ENCODE measurements at regions of chr12 and their contacts with region 1.

Region 1: GRCh38 chr12:69070319-69071090 is 137.5 kb upstream of the CPM start:
- DNase-seq: peak; percentile 39 to 48 (median 42)
- H3K4me3 ChIP-seq: no peak overlapping the region
- H3K4me3 Mint-ChIP-seq: no peak overlapping the region
- H3K27ac ChIP-seq: no peak overlapping the region
- H3K27ac Mint-ChIP-seq: peak overlapping the region in 1 of 7 donors; percentile 3
- H3K4me1 ChIP-seq: no peaks in the 10 kb centered on the region
- H3K4me1 Mint-ChIP-seq: no peaks in the 10 kb centered on the region
- H3K27me3 ChIP-seq: no peaks in the 10 kb centered on the region
- H3K27me3 Mint-ChIP-seq: peaks cover 3 to 7% of the 10 kb centered on the region in 2 donors

Region 2: DNA sequence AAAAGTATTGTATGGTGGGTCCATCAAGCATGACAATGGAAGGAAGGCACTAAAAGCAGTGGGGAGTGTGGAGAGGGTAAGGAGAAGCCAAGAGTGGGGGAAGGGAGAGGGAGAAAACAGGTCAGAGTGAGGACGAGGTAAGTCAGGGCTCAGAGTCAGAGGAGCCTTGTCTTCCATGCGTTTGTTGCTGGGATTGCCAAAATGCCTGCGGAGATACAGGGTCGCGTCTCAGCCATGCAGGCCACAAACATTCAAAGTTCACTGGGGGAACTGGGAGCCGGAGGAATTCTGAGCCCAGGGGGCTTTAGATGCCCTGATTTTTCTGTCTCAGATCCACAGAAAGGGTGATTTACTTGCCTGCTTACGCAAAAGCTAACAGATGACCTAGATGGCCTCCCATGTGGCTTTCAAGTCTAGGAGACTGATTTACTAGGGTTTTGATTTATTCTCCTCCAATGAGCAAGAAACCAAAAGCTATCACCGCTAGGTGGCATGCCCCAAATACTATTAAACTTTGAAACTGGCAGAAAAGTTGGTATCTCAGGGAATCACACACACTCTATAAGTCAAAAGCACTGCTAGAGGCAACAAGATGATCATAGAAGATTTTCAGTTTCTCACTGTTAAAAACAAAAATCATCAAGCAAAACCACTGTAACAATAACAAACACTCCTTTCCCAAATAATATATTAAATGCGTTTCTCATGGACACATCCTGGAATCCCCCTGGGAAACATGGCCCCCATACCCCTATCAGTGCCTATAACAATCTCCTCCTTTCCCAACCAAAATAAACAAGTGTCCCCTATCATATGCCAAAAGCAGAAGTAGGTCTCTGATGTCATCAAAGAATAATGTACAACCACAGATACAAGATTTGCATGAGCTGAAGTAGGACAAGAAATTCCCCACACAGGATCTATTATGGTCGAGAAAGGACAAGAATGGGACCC is 711.7 kb before region 1 on chr12:
- CTCF ChIA-PET with region 1: no interaction called
- POLR2A ChIA-PET with region 1: no interaction called
- intact Hi-C with region 1: loop called (anchors 2 kb)
- DNase-seq: peak; percentile 71 to 76 (median 74)
- H3K4me3 ChIP-seq: no peak overlapping the region
- H3K4me3 Mint-ChIP-seq: no peak overlapping the region
- H3K27ac ChIP-seq: no peak overlapping the region
- H3K27ac Mint-ChIP-seq: peak overlapping the region; percentile 2 to 80 (median 65)
- H3K4me1 ChIP-seq: peaks cover 21% of the 10 kb centered on the region
- H3K4me1 Mint-ChIP-seq: peaks cover 18 to 35% (median 24%) of the 10 kb centered on the region in 4 donors
- H3K27me3 ChIP-seq: no peaks in the 10 kb centered on the region
- H3K27me3 Mint-ChIP-seq: no peaks in the 10 kb centered on the region

Region 3: DNA sequence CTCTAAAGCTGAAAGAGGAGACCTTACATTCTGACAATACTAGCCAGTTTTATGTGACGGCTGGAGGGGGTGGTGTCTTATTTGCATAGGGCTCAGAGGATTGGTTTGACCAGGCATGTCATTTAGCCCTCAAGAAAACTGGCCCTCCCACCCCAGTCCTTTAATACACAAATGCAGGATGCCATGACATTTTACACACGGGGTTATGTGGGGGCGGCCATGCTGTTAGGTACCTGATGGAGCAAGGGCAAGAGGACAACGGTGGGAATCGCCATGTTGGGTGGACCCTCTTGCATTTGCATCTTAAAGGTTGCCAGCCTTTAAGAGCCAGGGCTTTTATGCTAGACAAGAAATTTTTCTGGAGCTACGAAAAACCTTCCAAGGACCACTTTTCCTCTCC is 239.2 kb before region 1 on chr12:
- CTCF ChIA-PET with region 1: interaction called, 12 read pairs
- POLR2A ChIA-PET with region 1: no interaction called
- intact Hi-C with region 1: no loop called
- DNase-seq: no peak
- H3K4me3 ChIP-seq: no peak overlapping the region
- H3K4me3 Mint-ChIP-seq: no peak overlapping the region
- H3K27ac ChIP-seq: no peak overlapping the region
- H3K27ac Mint-ChIP-seq: peak overlapping the region in 1 of 7 donors; percentile 69
- H3K4me1 ChIP-seq: peaks cover 4% of the 10 kb centered on the region
- H3K4me1 Mint-ChIP-seq: peaks cover 5 to 13% (median 6%) of the 10 kb centered on the region in 4 donors
- H3K27me3 ChIP-seq: no peaks in the 10 kb centered on the region
- H3K27me3 Mint-ChIP-seq: no peaks in the 10 kb centered on the region

Region 4: GRCh38 chr12:68864604-68865003 is 205.9 kb before region 1 on chr12:
- CTCF ChIA-PET with region 1: interaction called, 9 read pairs
- POLR2A ChIA-PET with region 1: no interaction called
- intact Hi-C with region 1: loop called (anchors 1 kb)
- DNase-seq: no peak
- H3K4me3 ChIP-seq: no peak overlapping the region
- H3K4me3 Mint-ChIP-seq: no peak overlapping the region
- H3K27ac ChIP-seq: no peak overlapping the region
- H3K27ac Mint-ChIP-seq: no peak overlapping the region
- H3K4me1 ChIP-seq: no peaks in the 10 kb centered on the region
- H3K4me1 Mint-ChIP-seq: no peaks in the 10 kb centered on the region
- H3K27me3 ChIP-seq: no peaks in the 10 kb centered on the region
- H3K27me3 Mint-ChIP-seq: peaks cover 0 to 2% of the 10 kb centered on the region in 2 donors

Region 5: DNA sequence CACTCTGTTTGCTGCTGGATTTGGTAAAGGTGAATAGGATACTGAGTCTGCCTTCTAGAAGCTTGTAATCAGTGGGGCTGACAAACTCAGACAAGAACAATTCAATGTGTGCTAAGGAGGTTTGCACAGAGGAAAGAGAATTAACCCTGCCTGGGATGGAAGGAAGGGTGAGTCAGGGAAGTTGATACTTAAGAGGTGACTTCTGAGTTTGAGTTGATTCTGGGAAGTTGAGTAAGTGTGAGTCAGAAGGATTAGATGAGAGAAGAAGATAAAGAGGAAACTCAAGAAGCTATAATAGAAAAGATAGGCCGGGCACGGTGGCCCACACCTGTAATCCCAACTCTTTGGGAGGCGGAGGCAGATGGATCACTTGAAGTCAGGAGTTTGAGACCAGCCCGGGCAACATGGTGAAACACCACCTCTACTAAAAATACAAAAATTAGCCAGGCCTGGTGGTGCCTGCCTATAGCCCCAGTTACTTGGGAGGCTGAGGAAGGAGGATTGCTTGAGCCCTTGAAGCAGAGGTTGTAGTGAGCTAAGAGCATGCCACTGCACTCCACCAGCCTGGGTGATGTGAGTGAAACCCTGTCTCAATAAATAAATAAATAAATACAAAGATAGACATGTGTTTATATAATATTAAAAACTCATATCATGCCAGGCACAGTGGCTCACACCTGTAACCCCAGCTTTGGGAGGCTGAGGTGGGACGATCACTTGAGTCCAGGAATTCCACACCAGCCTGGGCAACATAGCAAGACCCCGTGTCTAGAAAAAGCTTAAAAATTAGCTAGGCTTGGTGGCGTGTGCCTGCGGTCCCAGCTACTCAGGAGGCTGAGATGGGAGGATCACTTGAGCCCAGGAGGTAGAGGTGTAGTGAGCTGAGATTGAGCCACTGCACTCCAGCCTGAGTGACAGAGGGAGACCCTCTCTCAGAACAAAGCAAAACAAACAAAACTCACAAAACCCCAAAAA is 10.7 kb before region 1 on chr12:
- CTCF ChIA-PET with region 1: interaction called, 20 read pairs
- POLR2A ChIA-PET with region 1: no interaction called
- intact Hi-C with region 1: no loop called
- DNase-seq: no peak
- H3K4me3 ChIP-seq: no peak overlapping the region
- H3K4me3 Mint-ChIP-seq: no peak overlapping the region
- H3K27ac ChIP-seq: no peak overlapping the region
- H3K27ac Mint-ChIP-seq: no peak overlapping the region
- H3K4me1 ChIP-seq: no peaks in the 10 kb centered on the region
- H3K4me1 Mint-ChIP-seq: no peaks in the 10 kb centered on the region
- H3K27me3 ChIP-seq: no peaks in the 10 kb centered on the region
- H3K27me3 Mint-ChIP-seq: peaks cover 0 to 4% of the 10 kb centered on the region in 2 donors

Region 6: GRCh38 chr12:69254046-69254445 is 183.5 kb after region 1 on chr12:
- CTCF ChIA-PET with region 1: no interaction called
- POLR2A ChIA-PET with region 1: no interaction called
- intact Hi-C with region 1: loop called (anchors 1 kb)
- DNase-seq: peak in 4 of 5 donors; percentile 65 to 68 (median 67)
- H3K4me3 ChIP-seq: no peak overlapping the region
- H3K4me3 Mint-ChIP-seq: no peak overlapping the region
- H3K27ac ChIP-seq: peak overlapping the region; percentile 36
- H3K27ac Mint-ChIP-seq: peak overlapping the region; percentile 57 to 92 (median 86)
- H3K4me1 ChIP-seq: peaks cover 23% of the 10 kb centered on the region
- H3K4me1 Mint-ChIP-seq: peaks cover 22 to 43% (median 34%) of the 10 kb centered on the region in 4 donors
- H3K27me3 ChIP-seq: no peaks in the 10 kb centered on the region
- H3K27me3 Mint-ChIP-seq: no peaks in the 10 kb centered on the region

Region 7: DNA sequence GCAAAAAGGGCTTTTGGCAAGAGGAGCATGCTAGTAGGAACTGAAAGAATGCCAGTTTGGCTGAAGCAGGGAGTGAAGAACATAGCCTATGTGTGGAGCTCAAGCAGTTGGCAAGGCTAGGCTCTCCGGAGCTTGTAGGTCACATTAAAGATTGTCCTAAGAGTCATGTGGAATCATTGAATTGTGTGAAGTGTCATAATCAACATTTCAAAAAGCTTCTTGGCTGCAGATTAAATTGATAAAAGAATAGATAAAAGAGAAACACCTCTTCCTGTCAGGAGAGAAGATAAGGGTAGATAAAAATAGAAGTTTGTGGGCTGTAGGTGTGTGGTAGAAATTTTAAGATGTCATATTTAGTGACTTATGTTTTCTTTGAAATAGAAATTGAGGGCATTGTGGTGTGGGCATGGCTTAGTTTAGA is 205.0 kb after region 1 on chr12:
- CTCF ChIA-PET with region 1: no interaction called
- POLR2A ChIA-PET with region 1: no interaction called
- intact Hi-C with region 1: no loop called
- DNase-seq: peak in 4 of 5 donors; percentile 24 to 43 (median 31)
- H3K4me3 ChIP-seq: no peak overlapping the region
- H3K4me3 Mint-ChIP-seq: peak overlapping the region in 6 of 8 donors; percentile 16 to 77 (median 37)
- H3K27ac ChIP-seq: no peak overlapping the region
- H3K27ac Mint-ChIP-seq: peak overlapping the region; percentile 0 to 82 (median 4)
- H3K4me1 ChIP-seq: peaks cover 30% of the 10 kb centered on the region
- H3K4me1 Mint-ChIP-seq: peaks cover 27 to 56% (median 44%) of the 10 kb centered on the region in 4 donors
- H3K27me3 ChIP-seq: no peaks in the 10 kb centered on the region
- H3K27me3 Mint-ChIP-seq: no peaks in the 10 kb centered on the region

Measured in CD4-positive, alpha-beta memory T cell (primary cell).